ENCODE measurements at regions of chr6 and their contacts with region 1.

Region 1: GRCh38 chr6:42532038-42532669 is 31.7 kb upstream of the UBR2 start:
- DNase-seq: no peak
- H3K4me3 Mint-ChIP-seq: no peak overlapping the region
- H3K27ac Mint-ChIP-seq: no peak overlapping the region
- H3K4me1 Mint-ChIP-seq: no peaks in the 10 kb centered on the region
- H3K27me3 Mint-ChIP-seq: no peaks in the 10 kb centered on the region

Region 2: DNA sequence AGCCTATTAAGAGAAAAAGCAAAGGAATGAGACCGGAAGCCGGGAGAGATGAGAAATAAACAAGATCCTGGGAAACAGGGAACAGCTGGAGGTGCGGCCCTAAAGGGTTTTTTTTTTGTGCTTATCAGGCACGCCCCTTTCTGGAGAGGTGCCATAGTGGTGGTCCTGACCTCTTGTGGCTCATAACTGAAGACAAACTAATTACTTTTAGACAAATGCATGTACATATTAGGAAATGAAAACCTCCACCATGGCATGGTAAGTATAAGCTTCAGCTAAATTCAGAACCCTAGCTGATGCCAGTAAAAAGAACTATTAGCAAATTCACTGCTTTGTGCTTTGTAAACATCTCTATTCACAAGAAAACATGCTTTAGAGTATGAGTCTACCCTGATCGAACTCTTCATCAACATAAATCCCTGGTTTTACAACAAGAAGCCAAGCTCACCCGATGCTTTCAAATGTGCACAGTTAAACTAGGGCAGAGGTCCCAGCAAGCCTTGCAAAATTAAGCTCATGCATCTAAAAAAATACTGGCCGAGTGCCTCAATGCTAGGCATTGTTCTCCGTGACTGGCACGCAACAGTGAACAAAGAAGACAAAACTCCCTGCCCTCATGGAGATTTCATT is 218.1 kb before region 1 on chr6:
- CTCF ChIA-PET with region 1: interaction called, 10 read pairs
- POLR2A ChIA-PET with region 1: no interaction called
- DNase-seq: no peak
- H3K4me3 Mint-ChIP-seq: no peak overlapping the region
- H3K27ac Mint-ChIP-seq: no peak overlapping the region
- H3K4me1 Mint-ChIP-seq: peaks cover 53% of the 10 kb centered on the region
- H3K27me3 Mint-ChIP-seq: no peaks in the 10 kb centered on the region

Region 3: DNA sequence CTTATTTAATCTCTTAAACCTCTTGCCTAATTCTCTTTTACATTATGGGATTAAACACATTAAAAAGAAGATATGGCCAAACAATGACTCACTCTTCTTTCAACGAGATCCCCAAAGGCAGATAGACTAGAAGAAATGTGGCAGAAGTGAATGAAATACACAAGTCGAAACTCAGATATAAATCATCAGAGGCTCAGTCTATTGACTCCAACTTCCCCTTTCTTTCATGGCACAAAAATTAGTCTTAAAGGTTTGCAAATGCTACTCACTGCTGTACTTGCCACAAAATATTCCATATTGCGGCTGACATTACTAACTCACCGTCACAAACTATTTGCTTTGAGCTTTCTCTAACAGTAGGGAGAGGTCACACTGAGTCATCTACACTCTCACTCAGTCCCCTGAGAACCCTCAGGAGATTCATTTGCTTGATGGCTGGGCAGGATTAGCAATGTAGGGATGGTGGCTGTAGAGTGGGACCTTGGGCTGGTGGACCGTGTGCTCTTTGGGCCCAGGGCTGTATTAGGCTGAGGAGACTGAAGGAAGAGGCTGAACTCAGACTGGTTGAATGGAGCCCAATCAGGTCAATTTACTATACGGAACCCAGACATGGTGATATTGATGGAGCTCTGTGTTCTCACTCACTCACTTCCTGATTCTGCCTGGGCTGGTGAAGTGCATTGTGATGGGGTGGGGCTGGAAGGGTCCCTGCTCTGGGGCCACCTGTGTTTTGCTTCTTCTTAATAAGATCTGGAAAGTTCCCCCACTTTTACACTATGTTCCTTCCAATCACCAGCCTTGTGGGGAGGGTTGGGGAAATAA is 11.2 kb before region 1 on chr6:
- CTCF ChIA-PET with region 1: interaction called, 10 read pairs
- POLR2A ChIA-PET with region 1: no interaction called
- DNase-seq: no peak
- H3K4me3 Mint-ChIP-seq: no peak overlapping the region
- H3K27ac Mint-ChIP-seq: peak overlapping the region; percentile 31
- H3K4me1 Mint-ChIP-seq: peaks cover 13% of the 10 kb centered on the region
- H3K27me3 Mint-ChIP-seq: no peaks in the 10 kb centered on the region